ENCODE measurements at regions of chr10 and their contacts with region 1.

Region 1: DNA sequence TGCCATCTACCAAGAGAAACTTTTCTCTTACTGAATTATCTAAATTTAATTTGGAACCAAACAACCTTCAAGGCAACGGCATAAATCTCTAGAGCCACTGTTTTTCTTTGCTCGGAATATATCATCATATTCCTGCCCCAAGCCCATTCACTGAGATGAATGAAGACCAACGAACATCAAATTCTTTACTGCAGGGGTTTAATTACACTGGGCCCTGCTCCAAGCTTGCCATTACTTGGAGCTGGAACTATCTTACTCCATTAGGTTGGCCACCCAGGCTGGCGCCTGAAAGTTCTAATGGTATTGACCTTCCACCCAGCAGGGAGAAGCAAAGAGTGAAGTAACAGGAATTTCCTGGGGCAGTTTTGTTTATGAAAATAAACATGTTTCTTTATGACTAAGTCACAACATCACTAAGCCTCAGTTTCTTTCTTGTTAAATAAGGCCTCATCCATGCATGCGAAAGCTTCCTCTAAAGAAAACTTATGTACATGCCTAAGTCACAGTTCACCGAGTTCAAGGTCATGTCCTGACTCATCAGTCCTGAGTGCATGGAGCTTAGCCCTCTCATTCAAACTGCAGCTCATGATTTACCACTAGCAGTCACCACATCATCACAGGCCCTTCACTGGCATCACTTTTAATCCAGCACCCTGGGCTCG is 42.0 kb upstream of the ANAPC16 start:
- DNase-seq: peak in 1 of 2 experiments; percentile 89
- ATAC-seq: peak; percentile 53 to 68; a peak in 5 of 6 replicates
- H3K4me3 ChIP-seq: no peak overlapping the region
- H3K27ac ChIP-seq: peak overlapping the region; percentile 77 to 85
- H3K4me1 ChIP-seq: peaks cover 76% of the 10 kb centered on the region
- CTCF ChIP-seq: no peak
- EP300 ChIP-seq: peak; percentile 86 to 95; a peak in 3 of 5 replicates
- POLR2A ChIP-seq: no peak
- RAD21 ChIP-seq: peak in 1 of 2 experiments; percentile 24; a peak in 3 of 5 replicates

Region 2: DNA sequence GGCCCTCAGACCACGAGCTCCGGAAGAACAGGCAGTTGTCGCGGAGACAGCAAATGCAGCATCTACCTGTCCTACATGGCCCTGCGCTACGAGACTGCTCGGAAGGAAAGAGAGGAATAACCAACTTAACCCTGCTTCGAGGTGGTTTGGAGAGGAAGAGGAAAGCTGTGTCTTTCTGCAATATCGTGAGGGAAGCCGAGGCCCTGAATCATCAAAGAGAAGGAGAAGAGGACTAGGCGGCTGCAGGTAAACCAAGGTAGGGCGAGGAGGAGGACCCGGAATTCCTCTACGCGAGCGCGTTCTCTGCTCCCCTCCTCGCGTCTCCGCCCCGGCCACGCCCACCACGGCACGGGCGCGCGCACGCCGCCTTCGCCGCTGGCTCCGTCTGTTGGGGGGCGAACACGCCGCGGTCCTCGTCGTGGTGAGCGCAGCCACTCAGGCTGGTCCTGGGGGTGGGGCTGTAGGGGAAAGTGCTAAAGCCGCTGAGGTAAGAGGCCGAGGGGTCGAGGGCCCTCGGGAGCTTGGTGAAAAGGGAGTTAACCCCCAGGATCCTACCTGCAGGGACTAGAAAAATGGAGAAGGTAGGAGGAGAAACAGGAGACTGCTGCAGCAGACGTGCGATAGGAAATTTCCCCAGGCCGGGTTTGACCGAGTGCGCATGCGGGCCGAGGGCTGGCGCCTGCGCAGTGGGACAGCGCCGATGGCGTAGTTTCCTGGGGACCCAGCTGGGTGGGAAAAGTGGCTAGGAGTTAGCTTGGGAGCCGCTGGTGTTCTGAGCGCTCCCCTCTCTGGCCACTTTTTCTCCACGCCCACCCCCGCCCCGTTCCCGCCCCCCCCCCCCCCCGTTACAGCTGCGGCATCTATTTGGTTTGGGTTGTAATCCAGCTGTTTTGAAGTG is 42.1 kb after region 1 on chr10 and contains the starts of genes ANAPC16 and ASCC1:
- CTCF ChIA-PET with region 1: no interaction called
- POLR2A ChIA-PET with region 1: interaction called, 14 read pairs
- DNase-seq: peak; percentile 86 to 95
- ATAC-seq: peak; percentile 93 to 97
- H3K4me3 ChIP-seq: peak within 1 kb of the TSS; percentile 61
- H3K27ac ChIP-seq: peak within 1 kb of the TSS; percentile 89 to 95
- H3K4me1 ChIP-seq: peaks cover 54% of the 10 kb centered on the region
- CTCF ChIP-seq: no peak
- EP300 ChIP-seq: no peak
- POLR2A ChIP-seq: peak; percentile 87
- RAD21 ChIP-seq: 0 out of 5 replicates have a peak, but pooled peaks of 1 of the 2 experiments have one; percentile 19
- polyA plus RNA-seq, gene ANAPC16: 136 and 165 TPM in 2 replicates
- polyA plus RNA-seq, gene ASCC1: 82.3 and 83.7 TPM in 2 replicates

Measured in A549 (cell line).